GM12878 (cell line): ENCODE measurements at regions of chrX and their contacts with region 1.

Region 1: GRCh38 chrX:17007206-17007683 is 60.8 kb downstream of the REPS2 start:
- DNase-seq: no peak
- ATAC-seq: peak; percentile 91
- H3K4me3 ChIP-seq: no peak overlapping the region
- H3K27ac ChIP-seq: no peak overlapping the region
- H3K4me1 ChIP-seq: no peaks in the 10 kb centered on the region
- H3K27me3 ChIP-seq: peaks cover 0 to 3% of the 10 kb centered on the region in 2 experiments; a peak in 1 of 4 replicates
- CTCF ChIP-seq: peak; percentile 36 to 48 (median 47); a peak in 4 of 6 replicates
- EP300 ChIP-seq: no peak
- POLR2A ChIP-seq: no peak
- RAD21 ChIP-seq: peak; percentile 40; the same call in 1 of the 2 replicates

Region 2: GRCh38 chrX:16993791-16994318 is 13.4 kb before region 1 on chrX:
- CTCF ChIA-PET with region 1: interaction called, 13 read pairs
- POLR2A ChIA-PET with region 1: no interaction called
- RAD21 ChIA-PET with region 1: no interaction called
- SMC1A ChIA-PET with region 1: interaction called, 4 read pairs
- in situ Hi-C with region 1: no loop called
- intact Hi-C with region 1: no loop called
- DNase-seq: no peak
- ATAC-seq: peak; percentile 48; the same call in 1 of the 3 replicates
- H3K4me3 ChIP-seq: no peak overlapping the region
- H3K27ac ChIP-seq: no peak overlapping the region
- H3K4me1 ChIP-seq: no peaks in the 10 kb centered on the region
- H3K27me3 ChIP-seq: peaks cover 0 to 4% of the 10 kb centered on the region in 2 experiments; a peak in 1 of 4 replicates
- CTCF ChIP-seq: peak; percentile 18 to 34 (median 27); a peak in 3 of 6 replicates
- EP300 ChIP-seq: no peak
- POLR2A ChIP-seq: no peak
- RAD21 ChIP-seq: no peak

Region 3: DNA sequence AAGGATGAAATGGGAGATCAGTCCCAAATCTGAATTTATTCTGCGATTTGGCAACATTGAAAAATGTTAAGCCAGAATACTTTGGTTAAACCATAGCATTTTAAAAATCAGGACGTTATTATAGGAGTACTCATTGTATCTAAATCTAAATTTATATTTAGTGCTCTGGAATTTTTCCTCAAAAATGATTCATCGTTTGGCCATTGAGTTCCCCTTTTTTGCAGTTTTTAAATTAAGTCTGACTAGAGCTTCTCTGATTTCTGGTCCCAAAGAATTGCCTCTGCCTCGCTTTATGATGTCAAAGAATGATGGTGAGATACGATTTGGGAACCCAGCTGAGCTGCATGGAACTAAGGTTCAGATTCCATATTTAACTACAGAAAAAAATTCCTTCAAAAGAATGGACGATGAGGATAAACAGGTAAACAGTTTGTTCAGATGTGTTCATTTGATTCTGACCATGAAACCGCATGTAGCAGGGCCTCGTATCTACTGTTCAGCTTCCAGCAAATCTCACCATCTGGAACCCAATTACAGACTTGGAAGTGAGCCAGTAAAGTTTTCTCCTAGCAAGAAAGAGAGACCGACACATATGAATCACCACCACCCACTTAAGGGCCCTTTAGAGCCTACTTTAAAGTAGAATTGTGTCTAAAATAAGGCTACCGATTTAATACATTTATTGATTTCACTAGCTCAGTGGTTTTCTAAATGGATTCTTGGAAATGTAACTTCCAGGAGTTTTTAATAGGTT is 14.8 kb after region 1 on chrX:
- CTCF ChIA-PET with region 1: interaction called, 15 read pairs
- POLR2A ChIA-PET with region 1: no interaction called
- RAD21 ChIA-PET with region 1: interaction called, 3 read pairs
- SMC1A ChIA-PET with region 1: interaction called, 8 read pairs
- in situ Hi-C with region 1: no loop called
- intact Hi-C with region 1: no loop called
- DNase-seq: no peak
- ATAC-seq: no peak
- H3K4me3 ChIP-seq: no peak overlapping the region
- H3K27ac ChIP-seq: no peak overlapping the region
- H3K4me1 ChIP-seq: no peaks in the 10 kb centered on the region; the same call in 1 of the 2 replicates
- H3K27me3 ChIP-seq: no peaks in the 10 kb centered on the region
- CTCF ChIP-seq: no peak
- EP300 ChIP-seq: no peak
- POLR2A ChIP-seq: no peak
- RAD21 ChIP-seq: no peak

Region 4: DNA sequence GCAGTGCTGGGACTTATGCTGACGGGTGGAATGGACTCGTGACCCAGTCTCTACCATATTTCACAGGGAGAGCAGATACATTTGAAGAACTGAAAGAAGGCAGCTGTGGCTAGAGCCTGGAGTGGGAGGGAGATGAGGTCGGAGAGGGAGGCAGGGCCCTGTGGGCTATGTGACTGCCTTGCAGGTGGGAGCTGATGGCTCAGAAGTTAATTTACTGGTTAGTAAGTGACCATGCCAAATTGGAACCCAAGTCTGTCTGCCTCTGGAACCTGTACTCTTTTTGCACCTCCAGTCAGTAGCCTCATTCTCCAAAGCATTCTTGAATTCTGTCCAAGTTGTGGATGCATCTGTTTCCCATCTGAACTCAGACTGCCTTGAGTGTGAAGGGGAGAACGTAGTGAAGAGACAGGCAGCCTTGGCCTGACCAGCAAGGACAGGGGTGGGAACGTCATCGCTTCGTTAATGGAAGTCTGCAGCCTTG is 31.5 kb after region 1 on chrX:
- CTCF ChIA-PET with region 1: interaction called, 96 read pairs
- POLR2A ChIA-PET with region 1: no interaction called
- RAD21 ChIA-PET with region 1: interaction called, 3 read pairs
- SMC1A ChIA-PET with region 1: interaction called, 4 read pairs
- in situ Hi-C with region 1: no loop called
- intact Hi-C with region 1: no loop called
- DNase-seq: no peak
- ATAC-seq: peak; percentile 89
- H3K4me3 ChIP-seq: no peak overlapping the region
- H3K27ac ChIP-seq: no peak overlapping the region
- H3K4me1 ChIP-seq: no peaks in the 10 kb centered on the region
- H3K27me3 ChIP-seq: 0 out of 4 replicates have a peak, but pooled peaks cover 0 to 2% of the 10 kb centered on the region in 2 experiments
- CTCF ChIP-seq: no peak
- EP300 ChIP-seq: no peak
- POLR2A ChIP-seq: no peak
- RAD21 ChIP-seq: no peak